PC-3 (cell line): ENCODE measurements at regions of chr12 and their contacts with region 1.

Region 1: DNA sequence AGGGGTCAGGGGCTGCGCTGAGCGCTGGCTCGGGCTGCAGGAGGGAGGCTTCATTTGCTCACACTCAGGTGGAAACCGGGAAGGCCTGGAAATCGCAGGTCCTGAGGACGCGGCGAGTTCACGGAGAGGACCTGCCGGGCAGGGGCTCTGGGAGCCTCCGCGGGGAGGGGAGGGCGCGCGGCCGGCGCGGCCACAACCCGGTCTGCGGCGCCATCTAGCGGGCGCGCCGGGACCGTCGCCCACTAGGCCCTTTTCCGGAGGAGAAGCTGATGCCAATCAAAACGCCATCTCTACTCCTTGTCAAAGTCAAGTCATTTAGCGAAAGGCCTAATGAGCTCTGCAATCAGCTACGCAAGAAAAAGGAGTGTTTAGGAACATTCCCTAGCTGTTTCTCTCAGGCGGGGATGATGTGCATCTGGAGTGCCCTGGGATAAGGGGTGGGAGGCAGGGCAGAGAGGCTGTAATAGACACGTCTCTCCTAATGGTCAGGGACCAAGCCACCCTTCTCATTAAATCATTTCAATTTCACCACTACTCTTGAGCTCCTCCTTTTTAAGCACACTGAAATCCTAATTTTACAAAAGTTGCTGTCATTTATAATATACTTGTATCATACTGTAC is 885.8 kb upstream of the TMEM132C start:
- DNase-seq: peak; percentile 85
- ATAC-seq: peak; percentile 68
- H3K4me3 ChIP-seq: peak overlapping the region; percentile 65
- H3K27ac ChIP-seq: no peak overlapping the region
- H3K4me1 ChIP-seq: peaks cover 32% of the 10 kb centered on the region
- H3K27me3 ChIP-seq: no peaks in the 10 kb centered on the region
- CTCF ChIP-seq: peak; percentile 98

Region 2: DNA sequence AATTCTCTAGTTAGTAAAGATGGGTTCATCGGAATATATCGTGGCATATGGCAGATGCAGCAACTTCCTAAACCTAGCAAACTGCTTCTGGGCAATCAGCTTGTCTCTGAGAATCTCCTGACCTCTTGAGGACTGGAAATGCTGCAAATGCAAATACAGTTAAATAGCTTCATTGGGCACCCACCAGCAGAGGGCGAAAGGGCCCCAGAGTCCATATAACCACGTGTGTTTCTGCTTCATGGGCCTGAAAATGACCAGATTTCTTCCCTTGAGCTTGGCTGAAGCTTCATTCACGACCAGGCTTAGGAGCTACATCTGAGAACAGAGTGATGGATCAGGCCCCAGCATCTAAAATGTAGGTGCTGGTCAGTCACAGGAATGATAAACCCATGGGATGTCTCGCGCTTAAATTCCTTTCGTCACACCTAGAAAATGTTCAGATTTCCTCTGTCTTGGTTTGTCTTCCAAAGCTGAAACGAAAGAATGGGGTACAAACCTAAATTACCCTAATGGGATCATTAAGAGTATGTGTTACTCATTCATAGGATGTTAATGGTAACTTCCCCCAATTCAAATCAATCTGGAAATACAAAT is 596.7 kb before region 1 on chr12:
- CTCF ChIA-PET with region 1: interaction called, 10 read pairs
- POLR2A ChIA-PET with region 1: no interaction called
- intact Hi-C with region 1: loop called (anchors 1 kb)
- DNase-seq: peak; percentile 81
- ATAC-seq: peak; percentile 84
- H3K4me3 ChIP-seq: no peak overlapping the region
- H3K27ac ChIP-seq: no peak overlapping the region
- H3K4me1 ChIP-seq: no peaks in the 10 kb centered on the region
- H3K27me3 ChIP-seq: peaks cover 76% of the 10 kb centered on the region
- CTCF ChIP-seq: peak; percentile 95

Region 3: DNA sequence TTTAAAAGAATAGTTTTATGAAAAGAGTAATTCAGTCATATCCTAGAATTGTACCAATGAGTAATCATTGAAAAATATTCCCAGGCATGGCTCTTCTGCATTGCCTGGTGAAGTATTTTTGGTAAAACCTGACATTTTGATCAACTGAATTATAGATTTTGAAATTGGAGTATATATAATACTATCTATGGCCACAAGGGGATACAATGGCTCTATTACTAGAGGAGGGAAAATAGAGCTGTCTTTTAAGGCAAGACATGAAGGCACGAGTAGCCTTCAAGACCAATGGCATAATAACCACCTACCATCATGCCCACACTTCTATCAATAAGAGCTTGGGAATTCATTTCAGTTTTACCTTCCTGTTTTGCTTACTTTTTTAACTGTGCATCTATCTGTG is 355.6 kb before region 1 on chr12:
- CTCF ChIA-PET with region 1: interaction called, 4 read pairs
- POLR2A ChIA-PET with region 1: no interaction called
- intact Hi-C with region 1: loop called (anchors 5 kb)
- DNase-seq: peak; percentile 60
- ATAC-seq: peak; percentile 83
- H3K4me3 ChIP-seq: no peak overlapping the region
- H3K27ac ChIP-seq: no peak overlapping the region
- H3K4me1 ChIP-seq: no peaks in the 10 kb centered on the region
- H3K27me3 ChIP-seq: no peaks in the 10 kb centered on the region
- CTCF ChIP-seq: peak; percentile 72

Region 4: GRCh38 chr12:127165567-127166392 is 215.4 kb before region 1 on chr12:
- CTCF ChIA-PET with region 1: interaction called, 14 read pairs
- POLR2A ChIA-PET with region 1: no interaction called
- intact Hi-C with region 1: no loop called
- DNase-seq: peak; percentile 82
- ATAC-seq: peak; percentile 91
- H3K4me3 ChIP-seq: peak overlapping the region; percentile 48; the same call in 1 of the 2 replicates
- H3K27ac ChIP-seq: peak overlapping the region; percentile 38
- H3K4me1 ChIP-seq: peaks cover 21% of the 10 kb centered on the region
- H3K27me3 ChIP-seq: no peaks in the 10 kb centered on the region
- CTCF ChIP-seq: no peak

Region 5: DNA sequence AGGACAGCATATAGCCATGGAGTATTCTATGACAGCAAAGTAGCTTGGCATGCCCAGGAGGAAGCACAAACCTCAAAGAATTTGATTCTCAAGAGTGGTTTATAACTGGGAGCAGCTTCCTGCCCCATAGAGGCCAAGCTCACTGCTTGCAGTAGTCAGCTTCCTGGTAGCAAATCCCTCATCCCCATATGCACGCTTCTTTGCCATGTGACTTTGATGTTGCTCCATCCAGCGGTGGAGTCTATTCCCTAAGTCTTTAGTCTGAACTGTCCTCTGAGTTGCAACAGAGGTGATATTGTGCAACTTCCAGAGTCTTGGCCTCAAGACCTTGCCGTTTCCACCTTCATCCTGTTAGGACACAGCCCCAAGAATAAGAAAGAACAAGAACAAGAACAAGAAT is 111.0 kb before region 1 on chr12:
- CTCF ChIA-PET with region 1: no interaction called
- POLR2A ChIA-PET with region 1: no interaction called
- intact Hi-C with region 1: loop called (anchors 1 kb)
- DNase-seq: peak; percentile 58
- ATAC-seq: no peak
- H3K4me3 ChIP-seq: no peak overlapping the region
- H3K27ac ChIP-seq: no peak overlapping the region
- H3K4me1 ChIP-seq: peaks cover 41% of the 10 kb centered on the region
- H3K27me3 ChIP-seq: no peaks in the 10 kb centered on the region
- CTCF ChIP-seq: no peak

Region 6: DNA sequence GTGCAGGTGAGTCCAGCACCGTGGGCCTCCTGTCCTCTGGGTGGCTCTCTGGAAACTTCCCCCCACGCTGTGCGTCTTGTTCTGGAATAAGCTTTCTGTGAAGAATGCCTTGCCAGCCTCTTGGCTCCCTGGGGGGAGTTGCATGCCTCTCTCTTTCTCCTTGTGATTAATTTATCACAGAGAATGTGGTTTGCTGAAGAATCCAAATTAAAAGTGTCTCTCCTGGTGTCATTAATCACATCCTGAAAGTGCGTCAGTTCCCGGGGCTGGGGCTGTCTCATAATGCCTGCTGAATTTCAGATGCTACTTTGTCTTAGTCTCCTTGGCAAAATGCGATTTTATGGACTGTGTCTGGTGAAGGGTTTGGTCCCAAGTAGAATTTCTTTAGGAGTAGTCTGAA is 98.1 kb after region 1 on chr12:
- CTCF ChIA-PET with region 1: no interaction called
- POLR2A ChIA-PET with region 1: no interaction called
- intact Hi-C with region 1: loop called (anchors 5 kb)
- DNase-seq: no peak
- ATAC-seq: no peak
- H3K4me3 ChIP-seq: no peak overlapping the region
- H3K27ac ChIP-seq: no peak overlapping the region
- H3K4me1 ChIP-seq: no peaks in the 10 kb centered on the region
- H3K27me3 ChIP-seq: no peaks in the 10 kb centered on the region
- CTCF ChIP-seq: no peak